HepG2 (cell line): ENCODE measurements at regions of chr5 and their contacts with region 1.

Region 1: DNA sequence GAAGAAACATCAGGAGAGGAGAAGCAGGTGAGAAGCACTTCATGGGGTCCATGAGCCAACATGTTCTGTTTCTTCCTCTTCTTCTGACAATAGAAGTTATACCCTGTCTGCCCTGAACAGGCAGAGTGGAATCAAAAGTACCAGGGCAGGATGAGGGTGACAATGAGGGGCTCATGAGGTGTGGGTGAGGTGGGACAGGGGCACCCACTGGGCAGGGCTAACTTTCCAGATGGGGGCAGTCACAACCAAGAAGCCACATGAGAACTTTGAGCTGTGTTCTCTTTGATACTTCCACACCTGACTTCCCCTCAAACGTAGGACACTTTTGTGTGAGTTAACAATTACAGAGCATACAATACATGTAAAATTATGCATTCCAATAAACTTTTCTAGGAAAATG is 92.7 kb downstream of the LHFPL2 start:
- DNase-seq: no peak
- ATAC-seq: peak; percentile 38; the same call in 1 of the 3 replicates
- H3K4me3 ChIP-seq: no peak overlapping the region
- H3K27ac ChIP-seq: no peak overlapping the region
- H3K4me1 ChIP-seq: peaks cover 23% of the 10 kb centered on the region
- H3K27me3 ChIP-seq: no peaks in the 10 kb centered on the region
- CTCF ChIP-seq: peak; percentile 54
- EP300 ChIP-seq: no peak
- POLR2A ChIP-seq: no peak
- RAD21 ChIP-seq: no peak

Region 2: DNA sequence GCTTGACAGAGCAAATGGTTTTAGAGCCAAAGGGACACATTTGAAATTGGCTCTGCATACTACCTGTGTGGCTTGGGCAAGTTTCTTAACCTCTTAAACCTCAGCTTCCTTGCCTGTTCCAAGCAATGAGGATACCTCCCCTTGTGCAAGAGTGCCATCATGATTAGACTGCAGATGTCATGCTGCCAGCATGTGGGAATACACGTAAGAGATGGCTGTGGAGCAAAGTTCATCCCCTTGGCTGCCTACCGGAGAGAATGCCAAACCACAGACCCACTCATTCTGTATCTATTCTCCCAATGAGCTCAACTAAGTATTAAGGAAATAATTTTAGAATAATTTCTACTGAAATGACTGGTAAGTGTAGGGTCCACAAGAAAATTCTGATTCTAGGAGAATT is 1165.1 kb before region 1 on chr5:
- CTCF ChIA-PET with region 1: no interaction called
- POLR2A ChIA-PET with region 1: no interaction called
- in situ Hi-C with region 1: no loop called
- intact Hi-C with region 1: no loop called
- DNase-seq: peak; percentile 27
- ATAC-seq: peak; percentile 44; the same call in 1 of the 3 replicates
- H3K4me3 ChIP-seq: no peak overlapping the region
- H3K27ac ChIP-seq: no peak overlapping the region
- H3K4me1 ChIP-seq: peaks cover 31% of the 10 kb centered on the region
- H3K27me3 ChIP-seq: peaks cover 0 to 3% of the 10 kb centered on the region in 2 experiments; a peak in 1 of 5 replicates
- CTCF ChIP-seq: no peak
- EP300 ChIP-seq: no peak
- POLR2A ChIP-seq: no peak
- RAD21 ChIP-seq: no peak

Region 3: GRCh38 chr5:78621291-78621738 is 65.4 kb after region 1 on chr5:
- CTCF ChIA-PET with region 1: no interaction called
- POLR2A ChIA-PET with region 1: no interaction called
- in situ Hi-C with region 1: no loop called
- intact Hi-C with region 1: loop called (anchors 5 kb)
- DNase-seq: no peak
- ATAC-seq: no peak
- H3K4me3 ChIP-seq: no peak overlapping the region
- H3K27ac ChIP-seq: no peak overlapping the region
- H3K4me1 ChIP-seq: peaks cover 46% of the 10 kb centered on the region
- H3K27me3 ChIP-seq: no peaks in the 10 kb centered on the region
- CTCF ChIP-seq: no peak
- EP300 ChIP-seq: no peak
- POLR2A ChIP-seq: no peak
- RAD21 ChIP-seq: no peak